Activated T-helper 1 cell treated with anti-CD3 and anti-CD28 coated beads, Interleukin-12 subunit alpha, Interleukin-12 subunit beta, Interleukin-2, Interleukin-4 antibody, amounts not matched to agents 30 ng/mL and 10 ng/mL and 1 ng/mL, durations not matched to agents 14 hours and 24 hours and 36 hours (primary cell): ENCODE measurements at regions of chr9 and their contacts with region 1.

Region 1: DNA sequence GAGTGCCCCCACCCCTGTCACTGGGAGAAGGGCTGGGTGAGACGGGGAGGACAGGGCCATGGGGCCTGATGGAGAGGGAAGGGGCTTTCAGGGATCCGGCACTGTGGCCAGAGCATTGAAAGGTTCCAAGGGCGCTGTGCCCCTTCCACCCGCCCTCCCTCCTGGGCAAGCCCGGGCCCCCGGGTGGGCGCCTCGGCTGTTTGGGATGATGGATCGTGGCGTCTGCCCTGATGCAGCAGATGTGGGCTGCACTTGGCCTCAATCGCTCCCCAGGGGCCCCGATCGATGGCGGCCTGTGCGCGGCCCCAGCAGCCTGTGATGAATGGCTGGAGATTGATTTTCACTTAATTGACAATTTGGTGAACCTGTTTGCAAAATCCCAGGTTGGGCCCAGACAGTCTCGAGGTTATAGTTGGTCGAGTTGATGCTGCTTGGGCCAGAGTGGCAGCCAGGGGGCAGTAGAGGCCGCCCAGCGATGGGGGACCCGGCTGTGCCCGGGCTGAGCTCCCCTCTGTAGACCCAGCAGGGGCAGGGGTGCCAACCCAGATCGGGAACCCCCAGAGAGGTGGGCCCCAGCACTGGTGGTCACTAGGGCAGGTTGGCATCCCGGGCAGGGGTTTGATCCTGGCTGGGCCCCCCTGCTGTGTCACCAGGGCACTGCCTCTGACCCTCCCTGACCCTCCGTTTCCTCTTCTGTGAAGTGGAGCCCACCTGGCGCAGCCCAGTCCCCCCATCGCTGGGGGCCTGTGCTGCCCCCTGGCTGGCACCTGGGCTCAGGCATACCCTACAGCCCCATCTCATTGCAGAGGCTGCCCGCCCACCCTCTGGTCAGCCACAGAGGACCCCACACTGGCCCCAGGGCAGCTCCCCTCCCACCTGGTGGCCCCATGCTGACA is 34.7 kb downstream of the LHX3 start:
- DNase-seq: peak; percentile 24
- H3K4me3 Mint-ChIP-seq: no peak overlapping the region
- H3K27ac Mint-ChIP-seq: no peak overlapping the region
- H3K4me1 Mint-ChIP-seq: no peaks in the 10 kb centered on the region
- H3K27me3 Mint-ChIP-seq: peaks cover 8% of the 10 kb centered on the region

Region 2: DNA sequence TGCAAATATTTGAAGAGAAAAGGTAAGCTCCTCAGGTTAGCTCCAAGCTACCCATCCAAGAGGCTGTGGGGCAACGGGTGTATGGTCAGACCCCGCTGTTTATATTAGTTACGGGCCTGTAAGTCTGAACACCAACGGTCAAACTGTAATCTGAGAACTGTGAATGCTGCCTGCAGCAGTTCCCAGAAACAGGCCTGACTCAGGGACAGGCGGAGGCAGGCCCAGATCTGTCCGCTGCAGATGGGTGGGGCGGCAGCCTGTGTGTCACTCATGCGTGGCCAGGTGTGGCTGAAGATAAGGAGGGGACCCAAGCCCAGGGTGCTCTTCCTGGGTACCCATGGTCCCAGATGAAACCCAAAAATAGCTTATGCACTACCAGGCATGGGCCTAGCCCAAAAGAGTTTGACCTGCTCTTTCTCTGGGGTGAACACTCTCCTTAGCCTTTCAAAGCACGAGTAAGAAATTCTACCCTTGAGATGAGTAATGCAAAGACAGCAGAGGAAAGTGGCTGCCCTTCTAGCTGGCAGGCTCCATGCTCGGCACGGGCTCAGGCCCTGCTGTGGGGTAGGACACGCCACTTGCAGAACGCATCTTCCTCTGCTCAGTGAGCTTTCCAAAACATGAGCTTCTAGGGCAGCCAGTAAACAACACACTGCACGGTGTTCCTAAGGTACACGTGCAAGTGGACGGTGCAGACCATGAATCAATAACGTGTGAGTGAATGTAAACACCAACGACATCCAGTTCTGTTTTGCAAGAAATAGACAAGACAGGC is 218.2 kb before region 1 on chr9:
- intact Hi-C with region 1: no loop called
- DNase-seq: no peak
- H3K4me3 Mint-ChIP-seq: no peak overlapping the region
- H3K27ac Mint-ChIP-seq: no peak overlapping the region
- H3K4me1 Mint-ChIP-seq: peaks cover 6% of the 10 kb centered on the region
- H3K27me3 Mint-ChIP-seq: no peaks in the 10 kb centered on the region

Region 3: DNA sequence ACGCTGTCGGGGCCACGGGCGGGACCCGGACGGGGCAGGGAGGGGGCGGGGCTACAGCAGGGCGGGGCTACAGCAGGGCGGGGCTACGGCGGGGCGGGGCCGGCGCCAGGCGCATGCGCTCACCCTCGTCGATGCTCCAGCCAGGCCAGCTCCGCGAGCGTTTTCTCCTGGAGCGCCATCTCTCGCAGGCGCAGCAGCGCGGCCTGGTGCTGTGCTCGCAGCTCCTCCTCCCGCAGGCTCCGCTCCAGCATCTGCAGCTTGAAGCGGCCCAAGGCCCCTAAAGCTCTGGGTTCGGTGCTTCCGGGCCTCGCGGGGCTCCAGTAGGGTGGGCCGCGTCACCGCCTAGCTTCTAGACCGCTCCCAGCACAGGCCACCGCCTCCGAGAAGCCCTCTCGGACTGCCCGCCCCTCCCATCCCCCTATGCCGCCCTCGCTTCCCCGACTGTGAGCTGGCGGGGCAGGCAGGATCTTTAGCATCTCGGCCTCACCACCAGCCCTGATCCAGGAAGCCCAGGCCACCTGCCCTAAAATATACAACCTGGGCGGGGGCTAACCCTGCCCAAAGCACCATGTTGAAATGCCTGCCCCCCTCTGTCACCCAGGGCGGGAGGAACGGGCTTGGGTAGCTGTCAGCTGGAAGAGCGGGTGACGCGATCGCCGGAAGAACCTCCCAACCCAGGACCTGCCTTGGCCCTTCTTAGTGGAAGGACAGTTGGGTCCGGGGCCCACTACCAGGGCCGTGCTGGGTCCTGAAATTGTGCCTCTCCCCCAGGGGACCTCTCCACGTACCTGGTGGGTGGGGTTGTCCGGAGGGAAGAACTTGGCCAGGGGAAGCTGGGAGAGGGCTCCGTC is 97.2 kb after region 1 on chr9:
- intact Hi-C with region 1: loop called (anchors 5 kb)
- DNase-seq: peak; percentile 81
- H3K4me3 Mint-ChIP-seq: peak overlapping the region; percentile 83
- H3K27ac Mint-ChIP-seq: peak overlapping the region; percentile 70
- H3K4me1 Mint-ChIP-seq: peaks cover 6% of the 10 kb centered on the region
- H3K27me3 Mint-ChIP-seq: peaks cover 7% of the 10 kb centered on the region